ENCODE measurements at regions of chr3 and their contacts with region 1.

Region 1: GRCh38 chr3:48514436-48515227 is 10.7 kb upstream of the SHISA5 start:
- DNase-seq: peak in 6 of 10 donors; percentile 14 to 67 (median 33)
- ATAC-seq: peak; percentile 80 to 84
- H3K4me3 Mint-ChIP-seq: peak overlapping the region; percentile 31 to 86 (median 70)
- H3K27ac Mint-ChIP-seq: peak overlapping the region; percentile 8 to 90 (median 70)
- H3K4me1 Mint-ChIP-seq: peaks cover 37 to 72% (median 69%) of the 10 kb centered on the region in 4 donors
- H3K27me3 Mint-ChIP-seq: no peaks in the 10 kb centered on the region

Region 2: GRCh38 chr3:48465531-48466378 is 48.9 kb before region 1 on chr3:
- POLR2A ChIA-PET with region 1: interaction called, 10 read pairs
- DNase-seq: peak; percentile 63 to 82 (median 73)
- ATAC-seq: peak; percentile 97
- H3K4me3 Mint-ChIP-seq: peak overlapping the region; percentile 84 to 93 (median 90)
- H3K27ac Mint-ChIP-seq: peak overlapping the region; percentile 79 to 100 (median 96)
- H3K4me1 Mint-ChIP-seq: peaks cover 23 to 60% (median 59%) of the 10 kb centered on the region in 4 donors
- H3K27me3 Mint-ChIP-seq: no peaks in the 10 kb centered on the region

Region 3: DNA sequence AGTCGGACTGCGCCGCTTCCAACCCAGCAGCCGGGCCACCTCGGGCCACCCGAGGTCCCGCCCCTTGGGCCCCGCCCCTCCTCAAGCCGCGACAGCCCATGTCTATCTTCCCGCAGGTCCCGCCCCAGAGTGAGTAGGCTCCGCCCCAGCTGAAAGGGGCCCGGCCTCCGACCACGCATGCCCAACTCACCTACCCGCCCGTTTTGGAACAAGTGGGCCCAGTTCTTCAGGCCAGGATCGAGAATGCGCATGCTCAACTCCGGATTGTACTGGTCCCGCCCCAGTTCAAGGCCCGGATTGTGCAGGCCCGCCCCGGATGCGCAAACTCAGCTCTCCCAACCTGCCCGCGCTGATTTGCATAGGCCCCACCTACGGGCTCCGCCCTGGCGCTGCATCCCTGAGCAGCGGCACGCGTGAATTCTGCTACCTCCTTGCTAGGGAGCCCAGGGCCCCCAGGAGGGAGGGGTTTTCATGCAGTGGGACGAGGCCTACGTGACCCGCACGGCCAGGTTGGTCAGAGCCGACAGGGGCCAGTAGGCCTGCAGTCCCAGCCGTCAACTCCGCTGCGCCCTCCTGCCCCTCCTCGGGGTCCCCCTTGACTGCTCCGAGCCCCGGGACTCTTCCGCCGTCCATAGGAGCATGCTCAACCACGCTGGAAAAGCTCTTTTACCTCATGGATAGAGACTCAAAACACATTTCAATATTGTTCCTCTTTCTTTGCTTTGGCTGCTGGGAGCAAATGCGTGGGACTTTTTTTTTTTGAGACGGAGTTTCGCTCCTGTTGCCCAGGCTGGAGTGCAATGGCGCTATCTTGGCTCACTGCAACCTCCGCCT is 42.4 kb after region 1 on chr3 and contains the start of gene PFKFB4:
- POLR2A ChIA-PET with region 1: interaction called, 12 read pairs
- DNase-seq: peak; percentile 97 to 100 (median 99)
- ATAC-seq: peak; percentile 90 to 92
- H3K4me3 Mint-ChIP-seq: peak within 1 kb of the TSS; percentile 80 to 96 (median 88)
- H3K27ac Mint-ChIP-seq: peak within 1 kb of the TSS; percentile 12 to 89 (median 74)
- H3K4me1 Mint-ChIP-seq: peaks cover 12 to 41% (median 23%) of the 10 kb centered on the region in 4 donors
- H3K27me3 Mint-ChIP-seq: no peaks in the 10 kb centered on the region
- polyA plus RNA-seq, gene PFKFB4: 1.1 to 3.3 (median 1.9) TPM

Region 4: DNA sequence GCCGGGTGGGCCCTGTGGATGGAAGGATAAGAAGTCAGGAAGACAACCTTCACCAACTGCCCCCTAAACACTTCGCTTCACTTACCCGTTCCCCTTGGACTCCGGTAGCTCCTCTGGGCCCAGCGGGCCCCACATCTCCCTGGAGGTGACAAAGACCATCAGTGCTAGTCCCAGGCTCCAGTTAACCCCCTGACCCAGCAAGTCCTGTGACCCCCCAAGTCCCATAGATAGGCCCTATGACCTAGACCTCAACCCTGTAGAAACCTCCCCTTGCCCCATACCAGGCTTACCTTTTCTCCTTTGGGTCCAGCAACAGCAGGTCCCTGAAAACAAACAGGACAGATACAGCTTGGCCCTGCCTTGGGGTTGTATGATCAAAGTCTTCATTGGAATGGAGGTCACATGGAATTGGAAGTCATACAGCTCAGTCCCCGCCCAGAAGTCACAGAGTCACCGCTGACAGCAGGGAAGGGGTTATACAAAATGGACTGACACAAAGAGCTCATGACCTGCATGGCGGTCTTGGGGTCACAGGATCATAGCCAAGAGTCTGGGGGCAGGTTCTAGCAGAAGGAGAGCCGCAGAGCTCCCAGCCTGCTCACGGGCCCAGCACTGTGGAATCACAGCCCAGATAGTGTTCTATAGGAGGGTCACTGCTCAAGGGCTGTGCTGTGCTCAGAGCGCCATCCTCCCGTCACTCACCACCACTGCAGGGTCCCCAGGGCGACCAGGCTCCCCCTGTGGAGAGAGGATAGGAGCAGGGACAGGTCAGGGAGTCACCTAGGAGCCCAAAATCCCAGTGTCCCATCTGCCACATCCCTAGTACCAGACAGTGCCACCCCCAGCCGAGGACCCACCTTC is 67.2 kb after region 1 on chr3:
- POLR2A ChIA-PET with region 1: no interaction called
- DNase-seq: no peak
- ATAC-seq: no peak
- H3K4me3 Mint-ChIP-seq: no peak overlapping the region
- H3K27ac Mint-ChIP-seq: no peak overlapping the region
- H3K4me1 Mint-ChIP-seq: no peaks in the 10 kb centered on the region
- H3K27me3 Mint-ChIP-seq: peaks cover 0 to 6% (median 0%) of the 10 kb centered on the region in 5 donors

Measured in naive thymus-derived CD8-positive, alpha-beta T cell (primary cell).